Calu3 (cell line): ENCODE measurements at regions of chr11 and their contacts with region 1.

Region 1: GRCh38 chr11:21059879-21060278 is 390.5 kb downstream of the NELL1 start:
- DNase-seq: no peak
- H3K4me3 Mint-ChIP-seq: no peak overlapping the region
- H3K27ac Mint-ChIP-seq: no peak overlapping the region
- H3K4me1 Mint-ChIP-seq: no peaks in the 10 kb centered on the region
- H3K27me3 Mint-ChIP-seq: no peaks in the 10 kb centered on the region
- CTCF ChIP-seq: no peak

Region 2: DNA sequence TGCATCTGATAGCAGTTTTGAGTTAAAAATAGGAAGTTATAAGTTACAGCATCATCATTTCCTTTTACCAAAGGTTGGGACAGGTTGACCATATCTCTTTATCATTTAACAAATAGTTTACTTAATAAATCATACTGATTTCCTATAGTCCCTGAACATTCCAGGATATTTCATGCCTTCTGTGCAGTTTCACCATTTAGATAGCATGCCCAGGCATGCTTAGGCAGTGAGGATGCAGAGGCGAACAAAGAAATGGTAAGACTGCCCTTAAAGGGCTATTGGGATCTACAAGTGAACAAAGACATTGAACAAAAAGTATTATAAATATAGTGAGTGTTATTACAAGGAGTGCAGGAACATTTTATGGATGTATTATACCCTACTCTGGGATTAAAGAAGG is 575.9 kb before region 1 on chr11:
- CTCF ChIA-PET with region 1: no interaction called
- intact Hi-C with region 1: loop called (anchors 5 kb)
- DNase-seq: no peak
- H3K4me3 Mint-ChIP-seq: no peak overlapping the region
- H3K27ac Mint-ChIP-seq: no peak overlapping the region
- H3K4me1 Mint-ChIP-seq: no peaks in the 10 kb centered on the region
- H3K27me3 Mint-ChIP-seq: no peaks in the 10 kb centered on the region
- CTCF ChIP-seq: no peak

Region 3: GRCh38 chr11:20840341-20840740 is 219.5 kb before region 1 on chr11:
- CTCF ChIA-PET with region 1: no interaction called
- intact Hi-C with region 1: no loop called
- DNase-seq: no peak
- H3K4me3 Mint-ChIP-seq: no peak overlapping the region
- H3K27ac Mint-ChIP-seq: no peak overlapping the region
- H3K4me1 Mint-ChIP-seq: no peaks in the 10 kb centered on the region
- H3K27me3 Mint-ChIP-seq: no peaks in the 10 kb centered on the region
- CTCF ChIP-seq: no peak